ENCODE measurements at regions of chr1 and their contacts with region 1.

Region 1: DNA sequence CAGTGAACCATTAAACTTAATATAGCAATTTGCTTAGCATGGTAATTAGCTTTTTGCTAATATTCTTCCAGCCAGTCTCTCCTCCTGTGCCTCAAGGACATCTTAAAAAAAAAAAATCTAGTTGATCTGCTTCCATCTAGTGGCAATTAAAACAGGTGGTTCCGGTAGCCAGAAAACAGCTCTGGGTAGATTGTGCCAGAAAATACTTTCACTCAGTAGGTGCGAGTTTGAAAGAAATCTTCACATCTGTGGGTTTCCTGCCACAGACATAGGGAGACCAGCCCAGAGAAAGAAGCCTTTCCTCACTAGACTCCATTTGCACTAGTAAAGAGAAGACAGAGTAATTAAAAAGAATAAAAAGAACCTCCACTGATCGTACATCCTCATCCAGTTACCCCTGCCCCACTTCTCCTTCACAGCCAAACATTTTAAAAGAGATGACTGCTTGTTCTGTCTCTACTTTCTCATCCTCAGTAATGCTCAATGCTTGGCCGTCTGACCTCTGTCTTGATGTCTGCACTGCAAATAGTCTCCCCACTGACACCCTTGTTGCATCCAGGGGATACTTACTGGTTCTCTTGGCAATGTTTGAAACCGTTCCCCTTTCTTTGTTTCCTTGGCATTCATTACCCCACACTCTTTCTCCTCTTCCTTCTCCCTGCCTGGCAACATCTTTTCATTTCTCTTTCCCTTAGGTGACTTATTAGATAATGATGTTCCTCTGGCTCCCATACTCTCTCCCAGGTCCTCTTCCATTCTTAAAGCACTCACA is 16.9 kb downstream of the SELL start:
- DNase-seq: peak; percentile 65
- H3K4me3 Mint-ChIP-seq: peak overlapping the region; percentile 31
- H3K27ac Mint-ChIP-seq: peak overlapping the region; percentile 88
- H3K4me1 Mint-ChIP-seq: peaks cover 96% of the 10 kb centered on the region
- H3K27me3 Mint-ChIP-seq: no peaks in the 10 kb centered on the region

Region 2: GRCh38 chr1:169586395-169587255 is 107.9 kb before region 1 on chr1 and contains the start of gene F5:
- CTCF ChIA-PET with region 1: interaction called, 19 read pairs
- POLR2A ChIA-PET with region 1: interaction called, 31 read pairs
- DNase-seq: peak; percentile 85
- H3K4me3 Mint-ChIP-seq: peak within 1 kb of the TSS; percentile 87
- H3K27ac Mint-ChIP-seq: peak within 1 kb of the TSS; percentile 77
- H3K4me1 Mint-ChIP-seq: peaks cover 68% of the 10 kb centered on the region
- H3K27me3 Mint-ChIP-seq: no peaks in the 10 kb centered on the region
- total RNA-seq, gene F5: 8.9 to 11.0 TPM

Region 3: GRCh38 chr1:169680377-169681019 is 14.0 kb before region 1 on chr1:
- CTCF ChIA-PET with region 1: interaction called, 5 read pairs
- POLR2A ChIA-PET with region 1: interaction called, 43 read pairs
- DNase-seq: no peak
- H3K4me3 Mint-ChIP-seq: no peak overlapping the region
- H3K27ac Mint-ChIP-seq: no peak overlapping the region
- H3K4me1 Mint-ChIP-seq: peaks cover 41% of the 10 kb centered on the region
- H3K27me3 Mint-ChIP-seq: no peaks in the 10 kb centered on the region

Region 4: DNA sequence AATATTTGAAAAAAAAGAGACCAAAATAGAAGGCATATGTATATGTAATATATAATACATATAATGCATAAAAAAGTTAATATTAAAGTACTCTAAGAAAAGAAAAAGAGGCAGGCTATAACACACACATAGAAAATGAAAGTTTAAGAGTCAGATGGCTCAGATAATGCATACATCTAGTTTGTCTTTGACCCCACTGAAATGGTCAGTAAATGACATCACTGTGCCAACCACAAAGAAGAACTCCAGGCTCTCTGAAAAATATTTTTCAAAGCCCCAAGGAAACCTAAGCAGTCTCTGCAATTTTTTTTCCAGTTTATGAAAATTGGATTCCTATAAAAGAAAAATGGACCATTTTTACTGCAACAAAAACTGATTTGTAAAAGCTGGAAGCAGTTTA is 254.6 kb after region 1 on chr1:
- CTCF ChIA-PET with region 1: no interaction called
- POLR2A ChIA-PET with region 1: no interaction called
- DNase-seq: no peak
- H3K4me3 Mint-ChIP-seq: no peak overlapping the region
- H3K27ac Mint-ChIP-seq: no peak overlapping the region
- H3K4me1 Mint-ChIP-seq: no peaks in the 10 kb centered on the region
- H3K27me3 Mint-ChIP-seq: no peaks in the 10 kb centered on the region

Measured in activated CD4-positive, alpha-beta memory T cell treated with anti-CD3 and anti-CD28 coated beads, Interleukin-2, amount 10 ng/mL, durations not matched to agents 7 days and 5 days (primary cell).